Activated CD4-positive, alpha-beta memory T cell treated with anti-CD3 and anti-CD28 coated beads, Interleukin-2, amount 10 ng/mL, durations not matched to agents 7 days and 5 days (primary cell): ENCODE measurements at regions of chr2 and their contacts with region 1.

Region 1: DNA sequence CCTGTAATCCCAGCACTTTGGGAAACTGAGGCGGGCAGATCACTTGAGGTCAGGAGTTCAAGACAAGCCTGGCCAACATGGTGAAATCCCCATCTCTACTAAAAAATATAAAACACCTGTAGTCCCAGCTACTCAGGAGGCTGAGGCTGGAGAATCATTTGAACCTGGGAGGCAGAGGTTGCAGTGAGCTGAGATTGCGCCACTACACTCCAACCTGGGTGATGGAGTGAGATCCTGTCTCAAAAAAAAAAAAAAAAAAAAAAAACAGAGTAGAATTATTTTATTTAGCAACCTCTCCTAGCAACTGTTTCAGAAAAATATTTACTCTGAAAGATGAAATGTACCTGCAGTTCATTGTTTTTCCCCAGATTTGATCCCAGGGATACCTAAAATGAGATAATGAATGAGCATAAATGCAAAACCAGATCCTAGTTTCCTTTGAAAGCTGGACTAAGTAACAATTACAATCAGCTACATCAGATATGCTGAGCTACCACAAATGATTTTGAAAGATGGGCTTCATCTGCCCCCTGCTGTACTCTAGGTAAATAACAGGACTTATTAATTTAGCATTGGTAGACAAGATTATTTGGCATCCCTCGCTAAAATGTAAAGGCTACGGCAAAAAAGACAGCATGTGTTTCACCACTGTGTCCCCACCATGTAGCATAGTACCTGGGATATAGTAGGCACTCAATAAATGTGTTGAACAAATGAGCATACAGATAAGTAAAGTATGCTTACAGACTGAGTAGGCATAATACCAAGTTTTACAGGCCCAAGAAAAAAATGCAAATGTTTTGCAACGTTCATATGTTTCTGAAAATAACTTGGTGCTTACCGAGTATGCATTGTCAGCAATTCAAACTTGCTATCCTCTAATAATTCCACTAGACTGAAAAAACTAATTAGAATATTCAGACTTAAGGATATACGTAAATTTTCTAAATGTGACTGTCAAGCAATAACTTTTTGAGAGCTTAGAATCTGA is 102.5 kb downstream of the ATL2 start:
- DNase-seq: peak; percentile 36
- H3K4me3 Mint-ChIP-seq: no peak overlapping the region
- H3K27ac Mint-ChIP-seq: no peak overlapping the region
- H3K4me1 Mint-ChIP-seq: peaks cover 10% of the 10 kb centered on the region
- H3K27me3 Mint-ChIP-seq: peaks cover 8% of the 10 kb centered on the region

Region 2: GRCh38 chr2:37982147-37982582 is 292.4 kb before region 1 on chr2:
- CTCF ChIA-PET with region 1: interaction called, 24 read pairs
- POLR2A ChIA-PET with region 1: no interaction called
- DNase-seq: peak; percentile 56
- H3K4me3 Mint-ChIP-seq: no peak overlapping the region
- H3K27ac Mint-ChIP-seq: no peak overlapping the region
- H3K4me1 Mint-ChIP-seq: peaks cover 6% of the 10 kb centered on the region
- H3K27me3 Mint-ChIP-seq: no peaks in the 10 kb centered on the region

Region 3: DNA sequence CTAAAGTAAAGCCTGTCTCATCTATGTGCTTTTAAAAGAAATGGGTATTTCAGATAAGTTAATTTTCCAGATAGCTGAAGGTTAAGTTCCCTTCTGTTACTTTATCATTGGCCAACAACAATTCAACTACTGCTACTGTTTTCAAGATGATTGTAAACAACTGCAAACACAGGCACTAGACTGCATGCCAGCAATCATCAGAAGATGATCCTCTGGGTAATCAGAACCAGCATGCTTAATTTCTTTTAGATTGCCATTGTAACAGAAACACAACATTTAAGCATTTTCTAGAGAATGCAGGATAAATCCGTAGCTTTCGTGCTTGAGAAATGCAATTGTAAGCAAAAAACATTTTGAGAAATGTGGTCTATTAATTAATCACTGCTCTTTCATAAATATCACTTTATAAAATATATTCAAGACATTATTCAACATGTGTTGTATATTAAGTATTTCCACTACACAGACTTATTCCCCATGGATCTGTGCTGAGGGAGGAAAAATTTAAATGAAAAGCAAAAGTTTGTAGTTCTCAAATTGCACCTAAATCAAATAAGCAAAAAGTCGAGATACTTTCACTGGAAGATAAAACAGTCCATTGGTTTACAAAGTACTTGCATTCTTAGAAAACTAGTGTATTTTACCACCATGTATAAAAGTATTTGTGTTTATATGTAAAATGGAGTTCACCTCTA is 31.2 kb before region 1 on chr2:
- CTCF ChIA-PET with region 1: no interaction called
- POLR2A ChIA-PET with region 1: no interaction called
- DNase-seq: no peak
- H3K4me3 Mint-ChIP-seq: no peak overlapping the region
- H3K27ac Mint-ChIP-seq: no peak overlapping the region
- H3K4me1 Mint-ChIP-seq: no peaks in the 10 kb centered on the region
- H3K27me3 Mint-ChIP-seq: peaks cover 14% of the 10 kb centered on the region

Region 4: GRCh38 chr2:38315707-38316333 is 41.2 kb after region 1 on chr2:
- CTCF ChIA-PET with region 1: no interaction called
- POLR2A ChIA-PET with region 1: no interaction called
- DNase-seq: no peak
- H3K4me3 Mint-ChIP-seq: no peak overlapping the region
- H3K27ac Mint-ChIP-seq: no peak overlapping the region
- H3K4me1 Mint-ChIP-seq: peaks cover 6% of the 10 kb centered on the region
- H3K27me3 Mint-ChIP-seq: no peaks in the 10 kb centered on the region

Region 5: DNA sequence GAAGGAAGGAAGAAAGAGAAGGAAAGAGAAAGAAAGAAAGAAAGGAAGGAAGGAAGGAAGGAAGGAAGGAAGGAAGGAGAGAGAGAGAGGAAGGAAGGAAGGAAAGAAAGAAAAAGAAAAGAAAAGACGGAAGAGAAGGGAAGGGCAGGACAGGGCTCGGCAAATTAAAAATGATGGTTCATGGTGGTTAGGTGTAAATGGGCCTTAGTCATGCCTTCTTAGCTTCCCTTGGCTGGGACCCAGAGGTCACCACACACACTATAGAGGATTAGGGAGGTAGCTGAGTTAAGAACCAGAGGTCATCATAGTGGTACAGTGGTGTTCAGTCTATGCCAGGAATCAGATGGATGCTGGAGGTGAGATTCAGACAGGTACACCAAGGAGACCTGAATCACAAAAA is 111.8 kb after region 1 on chr2:
- CTCF ChIA-PET with region 1: no interaction called
- POLR2A ChIA-PET with region 1: no interaction called
- DNase-seq: no peak
- H3K4me3 Mint-ChIP-seq: no peak overlapping the region
- H3K27ac Mint-ChIP-seq: no peak overlapping the region
- H3K4me1 Mint-ChIP-seq: peaks cover 30% of the 10 kb centered on the region
- H3K27me3 Mint-ChIP-seq: peaks cover 7% of the 10 kb centered on the region